ENCODE measurements at regions of chr1 and their contacts with region 1.

Region 1: DNA sequence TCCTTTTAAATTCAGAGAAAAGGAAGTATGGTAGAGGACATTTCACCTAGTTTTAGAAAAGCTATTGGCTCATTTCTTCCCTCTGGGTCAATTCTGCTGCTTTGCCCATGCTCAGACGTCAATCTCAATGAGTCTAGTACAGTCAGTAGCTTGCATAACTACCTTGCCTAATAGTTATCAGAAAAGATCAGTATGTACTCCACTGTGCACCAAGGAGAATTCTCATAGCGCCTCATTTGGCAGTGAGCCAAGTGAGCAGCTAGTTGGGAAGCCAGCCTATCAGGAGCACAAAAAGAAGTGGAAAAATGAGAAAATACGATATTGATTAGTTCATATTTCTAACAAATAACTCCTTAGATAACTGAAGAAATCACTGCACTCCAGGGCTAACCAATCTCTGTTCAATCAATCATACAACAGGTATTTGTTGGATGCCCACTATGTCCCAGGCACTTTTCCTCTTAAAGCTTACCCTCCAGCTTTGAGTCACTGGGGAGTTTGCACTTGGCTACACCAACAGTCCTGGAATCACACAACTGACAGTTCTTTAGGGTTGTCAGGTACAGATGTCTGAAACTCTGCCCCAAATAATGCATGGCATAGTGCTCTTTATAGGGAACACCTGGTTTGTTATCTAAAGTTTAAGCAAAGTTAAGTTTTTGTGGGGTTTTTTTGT is 50.2 kb downstream of the PRDX6 start:
- DNase-seq: no peak

Region 2: GRCh38 chr1:174005032-174005431 is 477.7 kb after region 1 on chr1:
- intact Hi-C with region 1: loop called in 1 of 2 experiments (anchors 5 kb)
- DNase-seq: no peak

Measured in posterior vena cava (tissue), 2 donors.